B cell (primary cell): ENCODE measurements at regions of chr15 and their contacts with region 1.

Region 1: GRCh38 chr15:72473614-72474465 is at the start of gene ARIH1:
- DNase-seq: peak; percentile 99
- ATAC-seq: peak; percentile 74
- H3K4me3 ChIP-seq: peak within 1 kb of the TSS; percentile 90 to 98 (median 97)
- H3K4me3 Mint-ChIP-seq: peak within 1 kb of the TSS; percentile 95
- H3K27ac ChIP-seq: peak within 1 kb of the TSS; percentile 100
- H3K27ac Mint-ChIP-seq: peak within 1 kb of the TSS; percentile 99
- H3K4me1 ChIP-seq: peaks cover 26 to 38% of the 10 kb centered on the region in 2 donors
- H3K4me1 Mint-ChIP-seq: peaks cover 42% of the 10 kb centered on the region
- H3K27me3 ChIP-seq: no peaks in the 10 kb centered on the region
- H3K27me3 Mint-ChIP-seq: no peaks in the 10 kb centered on the region
- CTCF ChIP-seq: peak; percentile 34
- total RNA-seq, gene ARIH1: 199 and 227 TPM in 2 replicates

Region 2: GRCh38 chr15:72070817-72071447 is 402.9 kb before region 1 on chr15:
- CTCF ChIA-PET with region 1: no interaction called
- POLR2A ChIA-PET with region 1: no interaction called
- intact Hi-C with region 1: no loop called
- DNase-seq: peak; percentile 6
- ATAC-seq: no peak
- H3K4me3 ChIP-seq: no peak overlapping the region
- H3K4me3 Mint-ChIP-seq: peak overlapping the region; percentile 24
- H3K27ac ChIP-seq: no peak overlapping the region
- H3K27ac Mint-ChIP-seq: peak overlapping the region; percentile 37
- H3K4me1 ChIP-seq: peaks cover 0 to 8% of the 10 kb centered on the region in 2 donors
- H3K4me1 Mint-ChIP-seq: peaks cover 34% of the 10 kb centered on the region
- H3K27me3 ChIP-seq: no peaks in the 10 kb centered on the region
- H3K27me3 Mint-ChIP-seq: no peaks in the 10 kb centered on the region
- CTCF ChIP-seq: no peak

Region 3: GRCh38 chr15:72117486-72118399 is 356.1 kb before region 1 on chr15 and contains the start of gene MYO9A:
- CTCF ChIA-PET with region 1: no interaction called
- POLR2A ChIA-PET with region 1: no interaction called
- intact Hi-C with region 1: loop called (anchors 2 kb)
- DNase-seq: peak; percentile 100
- ATAC-seq: peak; percentile 74
- H3K4me3 ChIP-seq: peak within 1 kb of the TSS; percentile 72 to 94 (median 86)
- H3K4me3 Mint-ChIP-seq: peak within 1 kb of the TSS; percentile 94
- H3K27ac ChIP-seq: peak within 1 kb of the TSS; percentile 85
- H3K27ac Mint-ChIP-seq: peak within 1 kb of the TSS; percentile 99
- H3K4me1 ChIP-seq: peaks cover 14 to 17% of the 10 kb centered on the region in 2 donors
- H3K4me1 Mint-ChIP-seq: peaks cover 36% of the 10 kb centered on the region
- H3K27me3 ChIP-seq: no peaks in the 10 kb centered on the region
- H3K27me3 Mint-ChIP-seq: no peaks in the 10 kb centered on the region
- CTCF ChIP-seq: no peak
- total RNA-seq, gene MYO9A: 66.1 and 75.5 TPM in 2 replicates

Region 4: DNA sequence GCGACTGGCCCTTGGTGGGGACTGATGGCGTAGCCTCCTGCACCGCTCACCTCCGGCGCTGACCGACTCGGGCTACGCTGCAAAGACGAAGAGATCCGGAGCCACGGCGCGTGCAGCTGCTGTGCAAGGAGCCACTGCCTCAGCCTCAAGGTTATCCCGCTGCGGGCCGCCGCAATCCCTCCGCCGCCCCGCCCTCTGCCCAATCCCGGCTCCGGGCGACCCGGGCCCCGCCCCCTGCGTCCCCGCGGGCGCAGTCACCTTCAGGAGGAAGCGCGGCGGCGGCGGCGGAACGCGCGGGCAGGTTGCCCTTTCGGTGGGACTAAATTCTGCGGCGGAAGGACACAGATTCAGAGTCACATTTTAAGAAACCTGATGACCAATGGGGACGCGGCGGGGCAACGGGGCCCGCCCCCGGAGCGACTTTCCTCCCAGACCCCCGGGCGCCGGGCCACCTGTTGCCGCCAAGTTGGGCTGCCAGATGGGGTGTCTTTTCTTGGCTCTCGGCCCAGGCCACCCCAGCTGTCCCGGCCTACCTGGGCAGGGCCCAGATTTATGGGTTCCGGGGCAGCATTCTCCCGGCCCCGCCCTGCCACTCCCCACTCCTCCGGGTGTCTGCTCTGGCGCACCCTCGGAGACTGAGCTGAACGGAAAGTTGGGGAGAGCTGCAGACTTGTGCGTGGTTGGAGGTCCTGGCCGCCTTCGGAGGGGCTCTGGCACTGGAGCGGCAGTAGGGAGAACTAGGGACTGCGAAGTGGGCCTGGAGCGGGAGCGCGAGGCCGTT is 242.6 kb before region 1 on chr15 and contains the start of gene PKM:
- CTCF ChIA-PET with region 1: interaction called, 3 read pairs
- POLR2A ChIA-PET with region 1: interaction called, 4 read pairs
- intact Hi-C with region 1: loop called (anchors 1 kb)
- DNase-seq: peak; percentile 96
- ATAC-seq: peak; percentile 52
- H3K4me3 ChIP-seq: peak within 1 kb of the TSS; percentile 77 to 96 (median 93)
- H3K4me3 Mint-ChIP-seq: peak within 1 kb of the TSS; percentile 94
- H3K27ac ChIP-seq: peak within 1 kb of the TSS; percentile 91 to 94
- H3K27ac Mint-ChIP-seq: peak within 1 kb of the TSS; percentile 97
- H3K4me1 ChIP-seq: peaks cover 37 to 44% of the 10 kb centered on the region in 2 donors
- H3K4me1 Mint-ChIP-seq: peaks cover 38% of the 10 kb centered on the region
- H3K27me3 ChIP-seq: no peaks in the 10 kb centered on the region
- H3K27me3 Mint-ChIP-seq: no peaks in the 10 kb centered on the region
- CTCF ChIP-seq: no peak
- total RNA-seq, gene PKM: 306 and 323 TPM in 2 replicates

Region 5: DNA sequence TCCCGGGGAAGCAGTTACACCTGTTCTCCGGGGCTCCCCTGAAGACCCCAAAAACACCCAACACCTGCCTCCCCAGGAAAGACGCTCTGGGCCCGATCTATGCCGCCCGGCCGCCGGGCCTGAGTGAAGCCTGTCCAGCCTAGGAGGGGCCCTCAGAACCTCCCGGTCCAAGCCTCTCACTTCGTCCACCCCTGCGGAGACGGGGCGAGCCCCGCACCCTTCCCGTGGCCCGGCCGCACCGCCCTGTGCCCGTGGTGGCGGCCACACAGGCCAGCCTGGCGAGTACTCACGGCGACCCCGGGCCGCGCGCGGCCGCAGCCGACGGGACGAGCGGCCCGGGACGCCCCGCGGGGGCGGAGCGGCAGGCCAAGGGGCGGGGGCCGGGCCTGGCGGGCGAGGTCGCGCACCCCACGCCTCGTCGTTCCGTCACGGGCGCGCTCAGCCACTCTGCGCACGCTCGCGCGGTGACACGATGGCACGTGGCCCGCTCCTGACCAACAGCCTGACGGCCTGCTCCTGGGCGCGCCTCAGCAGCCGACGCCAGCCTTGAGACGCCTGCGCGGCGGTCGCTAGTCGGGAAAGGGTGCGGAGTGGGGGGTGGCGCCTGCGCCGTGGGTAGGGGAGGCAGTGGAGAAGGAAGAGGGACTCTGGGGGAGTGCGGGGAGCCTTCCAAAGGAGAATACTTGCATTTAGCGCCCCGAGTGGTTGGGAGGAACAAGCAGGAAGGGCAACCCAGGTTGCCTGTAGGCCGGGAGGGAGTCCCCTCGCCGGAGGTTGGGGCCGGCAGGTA is 201.4 kb before region 1 on chr15 and contains the start of gene PARP6:
- CTCF ChIA-PET with region 1: interaction called, 4 read pairs
- POLR2A ChIA-PET with region 1: no interaction called
- intact Hi-C with region 1: loop called (anchors 1 kb)
- DNase-seq: peak; percentile 98
- ATAC-seq: peak; percentile 94
- H3K4me3 ChIP-seq: peak within 1 kb of the TSS; percentile 53 to 88 (median 82)
- H3K4me3 Mint-ChIP-seq: peak within 1 kb of the TSS; percentile 89
- H3K27ac ChIP-seq: peak within 1 kb of the TSS; percentile 71 to 80
- H3K27ac Mint-ChIP-seq: peak within 1 kb of the TSS; percentile 96
- H3K4me1 ChIP-seq: peaks cover 16 to 23% of the 10 kb centered on the region in 2 donors
- H3K4me1 Mint-ChIP-seq: peaks cover 38% of the 10 kb centered on the region
- H3K27me3 ChIP-seq: no peaks in the 10 kb centered on the region
- H3K27me3 Mint-ChIP-seq: no peaks in the 10 kb centered on the region
- CTCF ChIP-seq: peak; percentile 57
- total RNA-seq, gene PARP6: 118 and 130 TPM in 2 replicates

Region 6: GRCh38 chr15:72319985-72320671 is 153.7 kb before region 1 on chr15 and contains the start of gene CELF6:
- CTCF ChIA-PET with region 1: no interaction called
- POLR2A ChIA-PET with region 1: no interaction called
- intact Hi-C with region 1: loop called (anchors 5 kb)
- DNase-seq: peak; percentile 96
- ATAC-seq: peak; percentile 75
- H3K4me3 ChIP-seq: peak within 1 kb of the TSS; percentile 8 to 69 (median 55)
- H3K4me3 Mint-ChIP-seq: peak within 1 kb of the TSS; percentile 88
- H3K27ac ChIP-seq: peak within 1 kb of the TSS in 1 of 2 donors; percentile 37
- H3K27ac Mint-ChIP-seq: peak within 1 kb of the TSS; percentile 83
- H3K4me1 ChIP-seq: peaks cover 10 to 19% of the 10 kb centered on the region in 2 donors
- H3K4me1 Mint-ChIP-seq: peaks cover 25% of the 10 kb centered on the region
- H3K27me3 ChIP-seq: no peaks in the 10 kb centered on the region
- H3K27me3 Mint-ChIP-seq: no peaks in the 10 kb centered on the region
- CTCF ChIP-seq: no peak
- total RNA-seq, gene CELF6: 4.3 and 5.3 TPM in 2 replicates

Region 7: GRCh38 chr15:72375847-72376581 is 97.8 kb before region 1 on chr15 and contains the start of gene HEXA:
- CTCF ChIA-PET with region 1: interaction called, 9 read pairs
- POLR2A ChIA-PET with region 1: interaction called, 7 read pairs
- intact Hi-C with region 1: loop called (anchors 1 kb)
- DNase-seq: peak; percentile 98
- ATAC-seq: peak; percentile 85
- H3K4me3 ChIP-seq: peak within 1 kb of the TSS; percentile 72 to 92 (median 85)
- H3K4me3 Mint-ChIP-seq: peak within 1 kb of the TSS; percentile 98
- H3K27ac ChIP-seq: peak within 1 kb of the TSS; percentile 85 to 95
- H3K27ac Mint-ChIP-seq: peak within 1 kb of the TSS; percentile 100
- H3K4me1 ChIP-seq: peaks cover 44 to 46% of the 10 kb centered on the region in 2 donors
- H3K4me1 Mint-ChIP-seq: peaks cover 54% of the 10 kb centered on the region
- H3K27me3 ChIP-seq: no peaks in the 10 kb centered on the region
- H3K27me3 Mint-ChIP-seq: no peaks in the 10 kb centered on the region
- CTCF ChIP-seq: no peak
- total RNA-seq, gene HEXA: 151 and 154 TPM in 2 replicates

Region 8: DNA sequence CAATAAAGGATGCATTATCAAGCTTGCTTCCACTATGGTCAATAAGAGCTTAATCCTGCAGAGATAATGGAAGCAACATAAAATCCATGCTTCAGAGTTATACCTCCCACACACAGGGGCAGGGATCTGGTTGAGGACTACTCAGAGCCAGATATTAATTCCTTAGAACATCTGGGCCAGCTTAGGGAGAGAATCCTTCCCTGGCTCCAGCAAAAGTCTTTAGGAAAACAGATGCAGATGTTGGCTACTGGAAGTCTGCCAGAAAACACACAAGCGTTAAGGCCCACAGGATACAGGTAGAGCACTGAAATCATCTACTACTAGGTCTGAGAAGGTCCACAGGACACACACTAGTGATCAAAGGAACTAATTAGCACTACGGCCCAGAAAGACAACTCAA is 50.6 kb before region 1 on chr15:
- CTCF ChIA-PET with region 1: no interaction called
- POLR2A ChIA-PET with region 1: no interaction called
- intact Hi-C with region 1: no loop called
- DNase-seq: no peak
- ATAC-seq: no peak
- H3K4me3 ChIP-seq: no peak overlapping the region
- H3K4me3 Mint-ChIP-seq: no peak overlapping the region
- H3K27ac ChIP-seq: no peak overlapping the region
- H3K27ac Mint-ChIP-seq: no peak overlapping the region
- H3K4me1 ChIP-seq: peaks cover 0 to 4% of the 10 kb centered on the region in 2 donors
- H3K4me1 Mint-ChIP-seq: peaks cover 6% of the 10 kb centered on the region
- H3K27me3 ChIP-seq: no peaks in the 10 kb centered on the region
- H3K27me3 Mint-ChIP-seq: no peaks in the 10 kb centered on the region
- CTCF ChIP-seq: no peak

Region 9: GRCh38 chr15:72685925-72686794 is 212.3 kb after region 1 on chr15 and contains the starts of genes BBS4 and HIGD2B:
- CTCF ChIA-PET with region 1: no interaction called
- POLR2A ChIA-PET with region 1: no interaction called
- intact Hi-C with region 1: loop called (anchors 5 kb)
- DNase-seq: peak; percentile 91
- ATAC-seq: peak; percentile 94
- H3K4me3 ChIP-seq: peak within 1 kb of the TSS; percentile 70 to 98 (median 88)
- H3K4me3 Mint-ChIP-seq: peak within 1 kb of the TSS; percentile 97
- H3K27ac ChIP-seq: peak within 1 kb of the TSS; percentile 77 to 91
- H3K27ac Mint-ChIP-seq: peak within 1 kb of the TSS; percentile 94
- H3K4me1 ChIP-seq: peaks cover 11 to 12% of the 10 kb centered on the region in 2 donors
- H3K4me1 Mint-ChIP-seq: peaks cover 25% of the 10 kb centered on the region
- H3K27me3 ChIP-seq: no peaks in the 10 kb centered on the region
- H3K27me3 Mint-ChIP-seq: no peaks in the 10 kb centered on the region
- CTCF ChIP-seq: no peak
- total RNA-seq, gene BBS4: 25.7 and 34.9 TPM in 2 replicates
- total RNA-seq, gene HIGD2B: 0.52 and 1.4 TPM in 2 replicates

Region 10: GRCh38 chr15:72722071-72722696 is 248.3 kb after region 1 on chr15:
- CTCF ChIA-PET with region 1: no interaction called
- POLR2A ChIA-PET with region 1: no interaction called
- intact Hi-C with region 1: no loop called
- DNase-seq: peak; percentile 68
- ATAC-seq: no peak
- H3K4me3 ChIP-seq: no peak overlapping the region
- H3K4me3 Mint-ChIP-seq: no peak overlapping the region
- H3K27ac ChIP-seq: no peak overlapping the region
- H3K27ac Mint-ChIP-seq: no peak overlapping the region
- H3K4me1 ChIP-seq: no peaks in the 10 kb centered on the region
- H3K4me1 Mint-ChIP-seq: no peaks in the 10 kb centered on the region
- H3K27me3 ChIP-seq: no peaks in the 10 kb centered on the region
- H3K27me3 Mint-ChIP-seq: no peaks in the 10 kb centered on the region
- CTCF ChIP-seq: peak; percentile 88

Region 11: DNA sequence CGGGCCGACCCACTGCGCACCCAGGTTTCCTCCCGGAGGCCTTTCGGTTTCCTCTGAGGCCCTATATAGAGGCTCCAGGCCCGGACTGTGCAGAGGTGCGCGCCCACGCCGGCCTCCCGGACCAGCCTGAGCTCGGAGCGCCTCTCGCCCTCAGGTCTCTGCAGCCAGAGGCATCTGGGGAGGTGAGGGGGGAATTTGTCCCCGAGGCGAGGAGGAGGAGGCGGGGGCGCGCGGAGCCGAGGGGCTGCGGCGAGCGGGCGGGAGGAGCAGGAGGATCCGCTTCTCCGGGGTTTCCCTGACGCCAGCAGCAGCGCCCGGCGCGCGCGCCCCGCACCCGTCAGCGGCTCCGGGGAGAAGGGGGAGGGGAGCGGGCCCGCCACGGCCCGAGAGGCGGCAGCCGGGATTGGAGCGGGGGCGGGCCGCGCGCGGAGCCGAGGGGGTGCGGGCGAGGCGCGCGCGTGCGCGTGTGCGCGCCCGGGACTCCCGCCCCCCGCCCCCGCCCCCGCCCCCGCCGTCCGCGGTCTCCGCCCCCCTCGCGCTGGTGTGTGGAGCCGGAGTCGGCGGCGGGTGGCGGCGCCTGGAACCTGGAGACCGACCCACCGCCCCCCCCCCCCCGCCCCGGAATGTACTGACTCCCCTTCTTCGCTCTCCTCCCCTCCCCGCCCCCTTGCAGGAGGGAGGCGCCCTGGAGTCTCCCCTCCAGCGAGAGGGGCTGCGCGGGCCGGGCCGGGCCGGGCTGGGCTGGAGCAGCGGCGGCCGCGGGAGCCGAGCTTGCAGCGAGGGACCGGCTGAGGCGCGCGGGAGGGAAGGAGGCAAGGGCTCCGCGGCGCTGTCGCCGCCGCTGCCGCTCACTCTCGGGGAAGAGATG is 578.2 kb after region 1 on chr15 and contains the start of gene NEO1:
- CTCF ChIA-PET with region 1: no interaction called
- POLR2A ChIA-PET with region 1: no interaction called
- intact Hi-C with region 1: no loop called
- DNase-seq: peak; percentile 84
- ATAC-seq: peak; percentile 76
- H3K4me3 ChIP-seq: peak within 1 kb of the TSS in 4 of 5 experiments; percentile 55 to 78 (median 68)
- H3K4me3 Mint-ChIP-seq: peak within 1 kb of the TSS; percentile 81
- H3K27ac ChIP-seq: no peak within 1 kb of the TSS
- H3K27ac Mint-ChIP-seq: peak within 1 kb of the TSS; percentile 64
- H3K4me1 ChIP-seq: peaks cover 8 to 11% of the 10 kb centered on the region in 2 donors
- H3K4me1 Mint-ChIP-seq: peaks cover 10% of the 10 kb centered on the region
- H3K27me3 ChIP-seq: peaks cover 0 to 32% (median 24%) of the 10 kb centered on the region in 4 experiments
- H3K27me3 Mint-ChIP-seq: peaks cover 37% of the 10 kb centered on the region
- CTCF ChIP-seq: no peak
- total RNA-seq, gene NEO1: 3.9 and 5.6 TPM in 2 replicates